Caco-2 (cell line): ENCODE measurements at regions of chr5 and their contacts with region 1.

Region 1: GRCh38 chr5:126354012-126354857 is 69.0 kb upstream of the GRAMD2B start:
- DNase-seq: peak in 1 of 2 experiments; percentile 33
- H3K4me3 ChIP-seq: no peak overlapping the region
- H3K4me3 Mint-ChIP-seq: no peak overlapping the region
- H3K27ac Mint-ChIP-seq: no peak overlapping the region
- H3K4me1 ChIP-seq: peaks cover 11% of the 10 kb centered on the region
- H3K4me1 Mint-ChIP-seq: peaks cover 6% of the 10 kb centered on the region
- H3K27me3 ChIP-seq: no peaks in the 10 kb centered on the region
- H3K27me3 Mint-ChIP-seq: no peaks in the 10 kb centered on the region
- CTCF ChIP-seq: peak; percentile 47 to 57

Region 2: GRCh38 chr5:126449751-126450271 is 95.6 kb after region 1 on chr5:
- CTCF ChIA-PET with region 1: no interaction called
- POLR2A ChIA-PET with region 1: no interaction called
- intact Hi-C with region 1: no loop called
- DNase-seq: no peak
- H3K4me3 ChIP-seq: no peak overlapping the region
- H3K4me3 Mint-ChIP-seq: no peak overlapping the region
- H3K27ac Mint-ChIP-seq: no peak overlapping the region
- H3K4me1 ChIP-seq: peaks cover 11% of the 10 kb centered on the region; the same call in 1 of the 2 replicates
- H3K4me1 Mint-ChIP-seq: no peaks in the 10 kb centered on the region
- H3K27me3 ChIP-seq: no peaks in the 10 kb centered on the region
- H3K27me3 Mint-ChIP-seq: no peaks in the 10 kb centered on the region
- CTCF ChIP-seq: no peak

Region 3: GRCh38 chr5:126594676-126595485 is 240.6 kb after region 1 on chr5 and contains the start of gene ALDH7A1:
- CTCF ChIA-PET with region 1: no interaction called
- POLR2A ChIA-PET with region 1: no interaction called
- intact Hi-C with region 1: loop called (anchors 1 kb)
- DNase-seq: peak; percentile 97 to 98
- H3K4me3 ChIP-seq: peak within 1 kb of the TSS; percentile 66
- H3K4me3 Mint-ChIP-seq: peak within 1 kb of the TSS; percentile 93
- H3K27ac Mint-ChIP-seq: peak within 1 kb of the TSS; percentile 91
- H3K4me1 ChIP-seq: peaks cover 20% of the 10 kb centered on the region
- H3K4me1 Mint-ChIP-seq: peaks cover 22% of the 10 kb centered on the region
- H3K27me3 ChIP-seq: no peaks in the 10 kb centered on the region
- H3K27me3 Mint-ChIP-seq: no peaks in the 10 kb centered on the region
- CTCF ChIP-seq: peak; percentile 27 to 77
- total RNA-seq, gene ALDH7A1: 192 and 204 TPM in 2 replicates